Posterior cingulate gyrus (tissue), 11 donors: ENCODE measurements at regions of chr11 and their contacts with region 1.

Region 1: DNA sequence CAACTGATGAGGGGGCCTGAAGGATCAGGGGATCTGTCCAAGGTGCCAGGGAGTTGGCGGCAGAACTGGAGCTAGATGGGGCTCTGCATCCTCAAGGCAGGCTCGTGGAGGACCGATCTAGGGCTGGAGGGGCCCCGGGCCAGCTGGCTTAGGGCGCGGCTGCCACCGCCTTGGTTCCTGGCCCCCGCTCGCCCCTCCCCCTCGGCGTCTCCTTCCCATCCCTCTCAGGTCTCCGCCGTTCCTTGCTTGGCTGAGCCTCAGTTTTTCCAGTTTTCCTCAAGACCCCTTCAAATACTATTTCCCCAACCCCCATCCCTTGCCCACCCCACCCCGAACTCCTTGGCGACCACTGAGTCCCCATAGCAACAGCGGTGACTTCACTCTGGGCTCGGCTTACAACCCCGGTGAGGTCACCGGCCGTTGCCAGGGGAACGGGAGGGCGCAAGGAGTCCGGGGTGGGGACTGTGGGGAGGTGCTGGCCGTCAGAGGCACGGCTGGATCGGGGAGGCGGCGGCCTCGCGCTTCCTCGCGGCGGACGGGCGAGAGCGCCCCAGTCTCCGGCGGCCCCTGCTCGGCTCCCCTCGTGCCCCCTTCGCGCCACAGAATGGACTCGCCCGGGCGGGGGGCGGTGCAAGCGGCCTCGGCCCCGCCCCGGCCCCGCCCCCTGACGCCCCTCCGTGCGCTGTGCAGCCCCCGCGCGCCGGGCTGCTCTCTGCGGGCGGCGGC is 7.5 kb downstream of the FREY1 start:
- DNase-seq: peak; percentile 86 to 99 (median 91)

Region 2: GRCh38 chr11:45885274-45885920 is 14.2 kb before region 1 on chr11 and contains the start of gene MAPK8IP1:
- intact Hi-C with region 1: loop called (anchors 2 kb)
- DNase-seq: peak in 4 of 10 donors; percentile 60 to 93 (median 86)

Region 3: DNA sequence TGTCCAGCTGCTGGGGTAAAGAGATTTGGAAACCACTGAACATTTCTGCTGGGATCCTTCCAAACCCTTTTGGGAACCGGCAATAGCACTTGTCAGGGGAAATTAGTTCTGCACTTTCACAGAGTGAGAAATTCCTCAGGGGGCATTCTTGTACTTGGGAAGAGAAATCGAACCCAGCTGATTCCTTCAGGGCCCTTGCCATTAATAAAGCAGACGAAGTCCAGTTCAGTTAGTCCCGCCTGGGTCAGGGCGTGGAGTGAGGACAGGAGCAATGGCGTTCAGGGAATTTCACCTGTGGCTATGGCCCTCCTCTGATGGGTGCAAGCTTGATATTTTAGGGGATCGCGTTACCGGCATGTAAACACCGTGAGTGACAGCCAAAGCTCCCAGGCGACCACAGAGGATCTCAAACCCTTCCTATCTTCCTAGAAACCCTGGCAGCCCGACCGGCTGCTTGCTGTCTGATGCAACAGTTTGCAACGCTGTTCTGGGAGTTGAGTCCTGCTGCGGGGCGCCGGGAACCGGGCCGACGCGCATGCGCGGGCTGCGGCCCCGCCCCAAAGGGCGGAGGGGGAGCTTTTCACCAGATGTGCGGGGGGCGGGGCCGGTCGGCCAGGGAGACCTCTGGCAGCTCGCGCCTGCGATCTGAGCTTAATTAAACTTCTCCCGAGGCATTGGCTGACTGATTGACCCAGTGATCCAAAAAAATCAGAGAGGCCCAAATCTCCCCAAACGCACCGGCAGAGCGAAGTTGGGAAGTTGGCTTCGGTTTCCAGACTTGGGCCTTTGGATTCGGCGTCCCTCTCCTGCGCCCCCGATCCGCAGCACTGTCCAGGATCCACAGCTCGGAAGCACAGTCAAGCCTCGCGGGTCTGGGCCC is 343.5 kb after region 1 on chr11:
- intact Hi-C with region 1: no loop called
- DNase-seq: peak; percentile 74 to 98 (median 84)